ENCODE measurements at regions of chr18 and their contacts with region 1.

Region 1: GRCh38 chr18:5879479-5879882 is 15.8 kb downstream of the TMEM200C start:
- DNase-seq: no peak
- ATAC-seq: no peak
- H3K4me3 ChIP-seq: no peak overlapping the region
- H3K27ac ChIP-seq: no peak overlapping the region
- H3K4me1 ChIP-seq: peaks cover 0 to 3% (median 0%) of the 10 kb centered on the region in 12 donors
- H3K27me3 ChIP-seq: peaks cover 0 to 26% (median 0%) of the 10 kb centered on the region in 9 donors
- CTCF ChIP-seq: peak; percentile 67 to 90 (median 80)
- POLR2A ChIP-seq: no peak

Region 2: GRCh38 chr18:6219116-6219717 is 339.7 kb after region 1 on chr18:
- intact Hi-C with region 1: loop called in 8 of 10 experiments (anchors 1 to 10 kb)
- DNase-seq: peak in 3 of 5 donors; percentile 15 to 40 (median 37)
- ATAC-seq: peak in 3 of 4 donors; percentile 62 to 77 (median 65)
- H3K4me3 ChIP-seq: no peak overlapping the region
- H3K27ac ChIP-seq: no peak overlapping the region
- H3K4me1 ChIP-seq: peaks cover 0 to 3% (median 0%) of the 10 kb centered on the region in 12 donors
- H3K27me3 ChIP-seq: no peaks in the 10 kb centered on the region
- CTCF ChIP-seq: peak; percentile 53 to 73 (median 62)
- POLR2A ChIP-seq: no peak

Region 3: DNA sequence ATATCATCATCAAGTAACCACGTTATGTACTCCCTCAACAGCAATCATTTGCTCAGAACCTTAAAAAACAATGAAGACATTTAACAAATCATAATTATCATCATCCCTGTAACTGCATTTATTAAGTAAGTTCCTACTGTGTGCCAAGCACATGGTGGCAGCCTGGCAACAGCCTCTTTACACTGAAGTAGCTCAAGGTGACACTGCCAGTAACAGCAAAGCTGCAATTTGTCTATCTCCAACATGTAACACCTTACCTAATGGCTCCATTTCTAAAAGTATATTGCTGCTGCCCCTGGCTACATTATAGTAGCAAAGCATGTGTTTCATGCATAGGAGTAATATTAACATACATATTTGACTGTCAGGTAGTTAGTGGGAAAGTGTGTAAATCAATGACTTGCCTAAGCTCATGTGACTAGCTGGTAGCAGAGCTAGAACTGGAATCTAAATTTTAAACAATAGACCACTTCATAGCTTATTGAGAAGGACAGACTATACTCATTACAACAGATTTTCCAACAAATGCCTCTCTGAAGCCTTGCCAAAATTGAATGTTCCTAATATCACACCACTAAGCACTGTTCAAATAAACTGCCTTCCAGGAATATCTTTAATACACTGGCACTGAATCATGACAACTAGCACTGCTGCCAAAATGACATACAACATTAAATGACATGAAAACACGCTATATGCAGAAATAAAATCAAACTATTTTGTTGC is 448.6 kb after region 1 on chr18:
- intact Hi-C with region 1: loop called in 1 of 10 experiments (anchors 10 kb)
- DNase-seq: no peak
- ATAC-seq: peak in 3 of 4 donors; percentile 58 to 90 (median 88)
- H3K4me3 ChIP-seq: no peak overlapping the region
- H3K27ac ChIP-seq: peak overlapping the region in 3 of 12 donors; percentile 40 to 51 (median 44)
- H3K4me1 ChIP-seq: peaks cover 0 to 7% (median 0%) of the 10 kb centered on the region in 12 donors
- H3K27me3 ChIP-seq: no peaks in the 10 kb centered on the region
- CTCF ChIP-seq: no peak
- POLR2A ChIP-seq: no peak

Region 4: DNA sequence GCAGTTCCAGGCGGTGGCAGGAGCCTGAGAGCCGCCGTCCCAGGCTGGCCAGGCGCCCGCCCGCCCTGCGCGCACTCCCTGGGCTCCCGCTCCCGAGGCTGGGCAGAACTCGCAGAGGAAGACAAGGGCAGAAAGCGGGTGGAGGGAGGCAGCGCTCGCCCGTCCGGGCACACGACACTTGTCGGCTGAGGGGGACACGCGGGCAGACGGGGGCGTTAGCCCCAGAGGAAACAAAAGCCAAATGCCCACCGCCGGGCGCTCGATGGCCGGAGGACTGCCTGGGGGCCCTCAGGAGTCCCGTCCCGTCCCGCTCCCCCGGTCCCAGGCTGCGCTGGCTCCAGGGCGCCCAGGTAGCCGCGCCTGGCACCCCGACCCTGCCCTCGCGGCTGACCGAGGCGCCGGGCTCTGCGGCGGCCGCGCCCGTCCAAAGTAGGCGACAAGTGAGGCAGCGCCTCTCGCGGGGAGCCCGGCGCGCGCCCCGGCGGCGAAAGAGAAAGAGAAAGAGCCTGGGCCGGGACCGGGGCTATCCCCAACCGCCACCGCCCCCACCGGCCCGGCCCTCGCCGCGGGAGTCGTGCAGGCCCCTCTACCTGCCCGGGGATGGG is 534.7 kb after region 1 on chr18:
- intact Hi-C with region 1: no loop called
- DNase-seq: peak; percentile 54 to 79 (median 71)
- ATAC-seq: peak in 3 of 4 donors; percentile 85 to 92 (median 89)
- H3K4me3 ChIP-seq: peak overlapping the region; percentile 58 to 94 (median 83)
- H3K27ac ChIP-seq: peak overlapping the region; percentile 52 to 87 (median 74)
- H3K4me1 ChIP-seq: peaks cover 0 to 22% (median 3%) of the 10 kb centered on the region in 12 donors
- H3K27me3 ChIP-seq: peaks cover 0 to 19% (median 6%) of the 10 kb centered on the region in 9 donors
- CTCF ChIP-seq: peak in 4 of 12 donors; percentile 17 to 38 (median 24)
- POLR2A ChIP-seq: no peak

Region 5: GRCh38 chr18:6482198-6482977 is 602.9 kb after region 1 on chr18:
- intact Hi-C with region 1: loop called in 9 of 10 experiments (anchors 1 to 5 kb)
- DNase-seq: peak; percentile 50 to 86 (median 78)
- ATAC-seq: peak; percentile 86 to 99 (median 97)
- H3K4me3 ChIP-seq: no peak overlapping the region
- H3K27ac ChIP-seq: no peak overlapping the region
- H3K4me1 ChIP-seq: peaks cover 0 to 18% (median 0%) of the 10 kb centered on the region in 12 donors
- H3K27me3 ChIP-seq: no peaks in the 10 kb centered on the region
- CTCF ChIP-seq: peak; percentile 58 to 96 (median 82)
- POLR2A ChIP-seq: no peak

Region 6: GRCh38 chr18:7021994-7022840 is 1142.7 kb after region 1 on chr18:
- intact Hi-C with region 1: loop called in 1 of 10 experiments (anchors 10 kb)
- DNase-seq: no peak
- ATAC-seq: no peak
- H3K4me3 ChIP-seq: no peak overlapping the region
- H3K27ac ChIP-seq: no peak overlapping the region
- H3K4me1 ChIP-seq: no peaks in the 10 kb centered on the region
- H3K27me3 ChIP-seq: no peaks in the 10 kb centered on the region
- CTCF ChIP-seq: peak in 3 of 12 donors; percentile 10 to 12 (median 11)
- POLR2A ChIP-seq: no peak

Measured in heart left ventricle (tissue), 16 donors.